ENCODE measurements at regions of chr17 and their contacts with region 1.

Region 1: DNA sequence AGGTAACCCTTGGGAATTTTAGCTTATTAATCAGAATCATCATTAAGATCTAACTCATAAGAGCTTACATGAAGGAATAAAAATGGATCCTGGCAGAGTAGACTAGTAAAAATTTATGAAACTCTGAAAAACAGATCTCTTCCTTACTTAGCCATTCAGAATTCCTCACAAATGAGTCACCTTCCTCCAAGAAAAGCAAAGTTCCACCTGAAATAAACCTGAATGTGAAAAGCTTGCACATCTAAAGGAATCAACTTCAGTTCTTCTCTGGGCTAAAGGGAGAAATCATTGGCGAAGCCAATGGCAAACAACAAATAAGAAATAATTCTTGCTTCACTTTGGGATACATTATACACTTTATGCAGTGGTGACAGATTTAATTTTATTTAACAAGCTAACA is 22.7 kb downstream of the MYO1D start:
- DNase-seq: no peak

Region 2: GRCh38 chr17:32803544-32803943 is 50.7 kb before region 1 on chr17:
- intact Hi-C with region 1: loop called (anchors 5 kb)
- DNase-seq: no peak

Measured in cardiac septum (tissue), 1 donor.